K562 (cell line): ENCODE measurements at regions of chr21 and their contacts with region 1.

Region 1: DNA sequence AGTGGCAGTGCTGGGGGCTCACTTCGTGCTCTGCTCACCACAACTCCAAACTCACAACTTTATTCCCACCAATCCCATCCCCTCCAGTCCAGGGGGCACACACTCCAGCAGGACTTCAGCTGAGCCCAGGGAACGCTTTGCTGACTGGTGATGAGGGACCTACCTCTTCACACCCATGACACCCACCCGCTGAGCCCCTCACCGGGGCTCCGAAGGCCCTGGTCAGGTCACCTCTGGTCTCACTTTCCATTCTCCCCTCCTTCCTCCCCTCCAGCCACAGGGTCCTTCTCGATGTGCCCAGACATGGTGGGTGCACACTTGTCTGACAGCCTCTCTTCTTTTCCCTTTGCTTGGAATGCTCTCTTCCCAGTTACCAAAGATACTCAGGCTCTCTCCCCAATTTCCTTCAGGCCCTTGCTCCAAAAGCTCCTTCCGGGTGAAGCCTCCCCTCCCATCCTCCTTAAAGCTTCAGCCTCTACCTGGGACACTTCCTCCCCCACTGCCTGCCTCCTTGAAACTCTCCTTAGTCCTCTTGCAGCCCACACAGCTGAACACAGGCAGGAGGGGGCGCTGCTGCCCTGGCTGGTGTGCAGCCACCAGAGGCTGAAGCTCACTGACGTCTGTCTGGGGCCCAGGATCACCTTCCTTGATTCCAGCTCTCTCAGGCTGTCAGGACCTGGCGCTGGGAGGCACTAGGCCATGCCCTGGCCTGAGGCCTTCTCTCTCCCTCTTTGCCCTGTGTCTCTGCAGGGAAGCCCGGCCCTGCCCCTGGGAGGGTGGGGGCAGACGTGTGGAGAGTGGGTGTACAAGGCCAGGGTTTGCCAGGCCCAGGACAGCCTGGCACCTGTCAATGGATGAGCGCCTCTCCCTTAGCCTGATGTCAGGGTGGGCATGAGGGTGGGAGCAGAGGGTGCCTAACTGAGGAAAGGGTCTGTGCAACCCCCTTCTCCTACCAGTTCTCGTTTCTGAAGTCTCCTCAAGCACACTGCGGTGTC is 1.6 kb downstream of the KCNE1 start:
- DNase-seq: peak; percentile 42 to 69 (median 56)
- ATAC-seq: peak; percentile 96
- H3K4me3 ChIP-seq: no peak overlapping the region
- H3K27ac ChIP-seq: no peak overlapping the region
- H3K4me1 ChIP-seq: 0 out of 5 replicates have a peak, but pooled peaks cover 0 to 3% of the 10 kb centered on the region in 2 experiments
- H3K27me3 ChIP-seq: peaks cover 12 to 14% of the 10 kb centered on the region in 2 experiments; a peak in 4 of 5 replicates
- CTCF ChIP-seq: peak; percentile 86 to 92 (median 90)
- EP300 ChIP-seq: no peak
- POLR2A ChIP-seq: no peak
- RAD21 ChIP-seq: peak; percentile 98 to 99

Region 2: DNA sequence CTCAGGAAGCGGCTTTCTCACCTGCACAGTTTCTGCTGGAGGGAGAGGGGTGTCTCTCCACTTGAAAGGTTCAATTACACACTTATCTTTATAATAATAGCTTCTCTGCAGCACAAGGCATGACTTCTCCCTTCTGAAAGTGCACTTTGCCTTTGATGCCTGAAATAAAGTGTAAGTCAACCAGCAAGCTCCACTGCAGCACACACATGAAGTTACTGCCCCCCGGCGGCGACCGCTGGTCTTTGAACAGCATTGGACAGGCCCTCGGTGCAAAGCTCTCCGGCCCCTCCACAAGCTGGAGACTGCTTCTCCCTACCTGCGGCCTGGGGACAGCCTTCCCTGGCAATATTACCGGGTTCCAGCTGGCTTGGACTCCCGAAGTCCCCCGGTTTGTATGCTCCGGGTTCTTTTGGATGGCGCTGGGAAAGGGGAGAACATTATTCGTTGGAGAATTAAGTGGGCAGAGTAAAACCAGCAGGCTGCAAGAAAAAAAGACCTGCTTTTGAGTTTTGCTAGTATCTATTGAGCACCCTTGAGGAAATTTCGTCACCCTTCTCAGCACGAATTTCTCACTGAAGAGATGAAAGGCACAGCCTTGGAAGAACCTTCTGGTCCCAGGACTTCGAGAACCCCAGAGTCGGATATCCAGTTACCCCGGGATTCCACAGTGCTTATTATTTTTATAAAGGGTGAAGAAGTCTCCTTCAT is 92.7 kb after region 1 on chr21:
- CTCF ChIA-PET with region 1: interaction called, 18 read pairs
- POLR2A ChIA-PET with region 1: interaction called, 3 read pairs
- in situ Hi-C with region 1: no loop called
- intact Hi-C with region 1: loop called (anchors 1 kb)
- DNase-seq: peak; percentile 60 to 84 (median 69)
- ATAC-seq: peak; percentile 100
- H3K4me3 ChIP-seq: no peak overlapping the region
- H3K27ac ChIP-seq: no peak overlapping the region
- H3K4me1 ChIP-seq: no peaks in the 10 kb centered on the region; a peak in 1 of 5 replicates
- H3K27me3 ChIP-seq: no peaks in the 10 kb centered on the region; a peak in 1 of 5 replicates
- CTCF ChIP-seq: peak; percentile 85 to 94 (median 91)
- EP300 ChIP-seq: no peak
- POLR2A ChIP-seq: no peak
- RAD21 ChIP-seq: peak; percentile 92 to 96